ENCODE measurements at regions of chr6 and their contacts with region 1.

Region 1: GRCh38 chr6:26156076-26156849 is 69.0 kb downstream of the HFE start:
- DNase-seq: peak; percentile 93
- H3K4me3 Mint-ChIP-seq: peak overlapping the region; percentile 85
- H3K27ac Mint-ChIP-seq: peak overlapping the region; percentile 100
- H3K4me1 Mint-ChIP-seq: peaks cover 51% of the 10 kb centered on the region
- H3K27me3 Mint-ChIP-seq: peaks cover 17% of the 10 kb centered on the region
- CTCF ChIP-seq: no peak

Region 2: DNA sequence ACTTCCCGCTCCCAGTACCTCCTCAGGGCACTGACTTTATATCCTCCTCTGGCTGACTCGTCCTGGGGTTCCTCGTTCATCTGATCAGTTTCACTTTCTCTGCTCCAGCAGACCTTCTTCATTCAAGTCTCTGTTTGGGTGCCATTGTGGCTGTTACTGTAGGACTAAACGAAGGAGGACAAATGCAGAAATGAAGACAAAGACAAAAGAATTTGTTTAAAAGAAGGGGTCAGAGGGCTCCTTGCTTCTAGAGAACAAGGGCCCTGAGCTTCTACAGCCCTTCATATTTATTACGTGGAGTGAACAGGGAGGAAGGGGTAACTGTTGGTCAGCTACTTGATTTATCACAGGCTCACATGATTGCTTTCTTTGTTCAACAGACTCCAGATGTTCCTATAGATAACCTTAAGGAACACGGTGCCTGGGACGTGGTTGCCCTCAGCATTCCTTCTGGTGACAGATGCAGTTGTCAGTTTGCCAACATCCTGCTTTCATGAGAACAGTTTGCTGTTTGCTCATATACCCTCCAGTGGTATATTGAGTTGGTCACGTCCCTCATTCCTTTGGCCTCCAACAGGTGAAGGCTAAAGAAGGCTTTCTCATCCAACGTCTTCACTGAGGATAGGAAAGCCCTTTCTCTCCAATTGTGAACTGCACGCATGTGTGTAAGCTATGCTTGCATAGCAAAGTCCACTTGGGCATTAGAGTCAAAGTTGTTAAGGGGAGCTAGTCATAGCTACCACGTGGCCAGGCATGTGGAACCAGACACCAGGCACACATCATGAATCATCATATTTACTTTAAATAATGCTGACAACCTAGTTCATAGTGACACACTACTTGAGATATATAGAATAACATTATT is 139.7 kb after region 1 on chr6:
- CTCF ChIA-PET with region 1: interaction called, 11 read pairs
- intact Hi-C with region 1: no loop called
- DNase-seq: peak; percentile 75
- H3K4me3 Mint-ChIP-seq: peak overlapping the region; percentile 64
- H3K27ac Mint-ChIP-seq: peak overlapping the region; percentile 88
- H3K4me1 Mint-ChIP-seq: peaks cover 38% of the 10 kb centered on the region
- H3K27me3 Mint-ChIP-seq: no peaks in the 10 kb centered on the region
- CTCF ChIP-seq: no peak

Measured in Calu3 (cell line).